Testis (tissue), 5 donors: ENCODE measurements at regions of chr5 and their contacts with region 1.

Region 1: DNA sequence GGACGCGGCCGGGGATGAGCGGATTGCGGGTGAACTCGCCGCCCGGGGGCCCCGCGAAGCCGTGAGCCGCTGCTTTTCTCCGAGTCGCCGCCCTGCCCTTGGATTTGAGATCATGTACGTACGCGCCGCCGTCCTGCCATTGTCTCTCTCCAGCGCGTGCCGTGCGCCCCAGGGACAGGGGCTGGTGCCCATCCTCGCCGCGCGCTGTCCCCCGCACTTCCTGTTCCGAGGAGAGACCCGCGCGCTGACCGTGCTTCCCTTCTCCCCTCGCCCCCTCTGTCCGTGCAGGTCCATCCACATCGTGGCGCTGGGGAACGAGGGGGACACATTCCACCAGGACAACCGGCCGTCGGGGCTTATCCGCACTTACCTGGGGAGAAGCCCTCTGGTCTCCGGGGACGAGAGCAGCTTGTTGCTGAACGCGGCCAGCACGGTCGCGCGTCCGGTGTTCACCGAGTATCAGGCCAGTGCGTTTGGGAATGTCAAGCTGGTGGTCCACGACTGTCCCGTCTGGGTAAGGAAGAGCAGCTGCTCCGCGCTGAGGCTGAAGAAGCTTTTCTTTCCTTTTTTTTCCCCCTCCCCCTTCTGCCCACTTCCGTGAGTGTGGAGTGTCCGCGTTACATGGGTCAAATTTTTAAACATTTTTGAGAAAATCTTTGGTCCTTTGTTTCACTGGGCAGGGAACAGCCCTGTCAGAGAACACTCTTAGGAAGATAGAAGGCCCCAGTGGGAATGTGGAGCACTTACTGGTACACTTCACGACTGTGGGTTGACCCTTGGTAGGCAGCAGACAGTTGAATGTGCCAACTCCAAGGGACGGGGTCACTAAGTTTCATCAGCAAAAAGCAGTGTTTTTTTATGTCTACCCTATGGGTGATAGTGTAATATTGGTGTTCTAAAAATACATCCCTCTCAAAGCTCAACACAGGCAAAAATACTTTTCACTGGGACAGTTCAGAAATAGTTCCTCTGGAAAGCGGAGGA is 727 bp downstream of the RHOBTB3 start:
- DNase-seq: peak; percentile 55
- H3K4me3 ChIP-seq: peak overlapping the region; percentile 87 to 89
- H3K27ac ChIP-seq: peak overlapping the region; percentile 96 to 99
- H3K4me1 ChIP-seq: peaks cover 58% of the 10 kb centered on the region
- H3K27me3 ChIP-seq: no peaks in the 10 kb centered on the region
- CTCF ChIP-seq: no peak
- POLR2A ChIP-seq: no peak

Region 2: DNA sequence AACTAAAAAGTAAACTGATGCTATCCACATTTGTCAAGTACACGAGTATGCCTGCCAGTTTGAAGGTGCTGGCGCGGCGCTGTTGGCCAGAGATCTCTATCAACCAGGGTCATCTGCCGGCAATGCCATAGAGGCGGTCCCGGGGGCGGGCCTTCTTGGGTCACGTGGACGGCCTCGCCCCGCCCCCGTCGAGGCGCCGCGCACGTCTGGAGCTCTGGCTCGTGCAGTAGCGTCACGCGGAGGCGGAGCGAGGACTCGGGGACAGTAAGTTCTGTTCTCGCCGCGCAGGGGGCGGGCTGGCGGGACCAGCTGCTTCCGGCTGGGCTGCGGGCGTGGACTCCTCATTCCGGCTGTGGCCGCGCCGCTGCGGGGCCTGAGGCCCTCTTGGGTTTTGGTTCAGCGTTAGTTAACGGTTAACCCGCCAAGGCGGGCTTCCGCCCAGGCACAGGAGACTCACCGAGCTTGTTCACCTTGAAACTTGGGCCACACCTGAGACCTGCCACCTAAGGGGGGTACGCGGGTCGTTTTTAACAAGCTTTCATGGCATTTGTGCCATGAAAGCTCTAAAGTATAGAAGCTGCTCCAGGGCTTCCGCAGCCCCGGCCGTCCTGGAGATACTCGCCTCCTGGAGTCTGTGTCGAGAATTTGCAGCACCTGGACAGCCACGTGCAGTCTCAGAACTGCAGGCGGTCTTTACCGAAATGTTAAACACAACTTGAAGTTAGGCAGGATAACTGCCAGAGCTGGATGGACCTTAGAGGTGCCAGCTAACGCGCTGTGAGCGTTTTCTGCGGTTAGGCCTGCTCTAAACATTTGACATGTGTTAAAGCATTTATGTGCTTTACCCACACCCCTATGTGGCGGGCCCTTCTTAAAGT is 85.1 kb before region 1 on chr5 and contains the start of gene RFESD:
- intact Hi-C with region 1: loop called (anchors 2 kb)
- DNase-seq: peak; percentile 99
- H3K4me3 ChIP-seq: peak within 1 kb of the TSS; percentile 60 to 66
- H3K27ac ChIP-seq: peak within 1 kb of the TSS; percentile 95
- H3K4me1 ChIP-seq: peaks cover 12% of the 10 kb centered on the region
- H3K27me3 ChIP-seq: no peaks in the 10 kb centered on the region
- CTCF ChIP-seq: peak in 2 of 3 experiments; percentile 27 to 29
- POLR2A ChIP-seq: peak; percentile 67
- total RNA-seq, gene RFESD: 11.8 to 12.8 TPM

Region 3: DNA sequence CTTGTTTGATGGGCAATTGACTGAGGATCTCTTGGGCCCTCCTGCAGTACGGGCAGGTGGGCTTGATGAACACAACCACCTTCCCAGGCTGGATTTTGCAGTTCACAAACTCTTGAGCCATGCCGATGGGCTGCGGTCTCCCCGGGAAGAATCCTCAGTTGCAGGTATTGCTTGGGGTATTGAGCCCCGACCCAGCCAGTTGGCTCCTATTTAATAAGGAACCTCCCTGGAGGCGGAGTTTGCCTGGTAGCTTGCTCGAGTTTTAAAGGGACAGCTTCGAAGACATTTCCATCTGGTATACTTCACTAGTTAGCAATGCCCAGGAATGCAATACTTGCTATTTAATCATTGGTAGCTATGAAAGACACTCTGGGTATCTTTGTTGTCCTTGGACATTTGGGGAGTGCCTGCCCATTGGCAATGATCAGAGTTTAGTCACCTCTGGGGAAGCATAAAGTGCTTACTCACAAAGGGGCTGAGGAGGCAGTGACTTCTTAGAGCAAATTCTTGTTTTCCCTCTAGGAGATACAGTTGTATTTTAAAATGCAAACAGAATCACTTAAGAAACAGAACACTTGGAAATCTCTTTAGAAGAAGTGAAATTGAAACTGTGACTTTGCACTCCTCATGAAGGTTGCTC is 90.8 kb after region 1 on chr5 and contains the start of gene GLRX:
- intact Hi-C with region 1: no loop called
- DNase-seq: peak; percentile 85
- H3K4me3 ChIP-seq: peak within 1 kb of the TSS; percentile 58 to 81
- H3K27ac ChIP-seq: peak within 1 kb of the TSS; percentile 61 to 83
- H3K4me1 ChIP-seq: peaks cover 20% of the 10 kb centered on the region
- H3K27me3 ChIP-seq: no peaks in the 10 kb centered on the region
- CTCF ChIP-seq: no peak
- POLR2A ChIP-seq: no peak
- total RNA-seq, gene GLRX: 4.5 to 5.4 TPM